Mammary epithelial cell (primary cell): ENCODE measurements at regions of chr19 and their contacts with region 1.

Region 1: GRCh38 chr19:14674764-14675163 is at the start of gene ADGRE3:
- DNase-seq: no peak
- H3K4me3 ChIP-seq: no peak within 1 kb of the TSS
- H3K27ac ChIP-seq: no peak within 1 kb of the TSS
- H3K4me1 ChIP-seq: no peaks in the 10 kb centered on the region
- H3K27me3 ChIP-seq: no peaks in the 10 kb centered on the region
- CTCF ChIP-seq: no peak
- total RNA-seq, gene ADGRE3: not detected

Region 2: GRCh38 chr19:14432791-14433553 is 241.8 kb before region 1 on chr19 and contains the start of gene PKN1:
- CTCF ChIA-PET with region 1: no interaction called
- dilution Hi-C with region 1: no loop called
- in situ Hi-C with region 1: no loop called
- intact Hi-C with region 1: no loop called
- DNase-seq: no peak
- H3K4me3 ChIP-seq: peak within 1 kb of the TSS; percentile 12 to 53 (median 39)
- H3K27ac ChIP-seq: no peak within 1 kb of the TSS
- H3K4me1 ChIP-seq: peaks cover 17% of the 10 kb centered on the region
- H3K27me3 ChIP-seq: no peaks in the 10 kb centered on the region
- CTCF ChIP-seq: peak in 1 of 2 donors; percentile 18
- total RNA-seq, gene PKN1: 26.3 to 43.3 TPM

Region 3: GRCh38 chr19:14467816-14468215 is 206.9 kb before region 1 on chr19:
- CTCF ChIA-PET with region 1: no interaction called
- dilution Hi-C with region 1: no loop called
- in situ Hi-C with region 1: no loop called
- intact Hi-C with region 1: no loop called
- DNase-seq: peak; percentile 35
- H3K4me3 ChIP-seq: no peak overlapping the region
- H3K27ac ChIP-seq: no peak overlapping the region
- H3K4me1 ChIP-seq: peaks cover 5% of the 10 kb centered on the region
- H3K27me3 ChIP-seq: no peaks in the 10 kb centered on the region
- CTCF ChIP-seq: peak; percentile 12 to 30

Region 4: DNA sequence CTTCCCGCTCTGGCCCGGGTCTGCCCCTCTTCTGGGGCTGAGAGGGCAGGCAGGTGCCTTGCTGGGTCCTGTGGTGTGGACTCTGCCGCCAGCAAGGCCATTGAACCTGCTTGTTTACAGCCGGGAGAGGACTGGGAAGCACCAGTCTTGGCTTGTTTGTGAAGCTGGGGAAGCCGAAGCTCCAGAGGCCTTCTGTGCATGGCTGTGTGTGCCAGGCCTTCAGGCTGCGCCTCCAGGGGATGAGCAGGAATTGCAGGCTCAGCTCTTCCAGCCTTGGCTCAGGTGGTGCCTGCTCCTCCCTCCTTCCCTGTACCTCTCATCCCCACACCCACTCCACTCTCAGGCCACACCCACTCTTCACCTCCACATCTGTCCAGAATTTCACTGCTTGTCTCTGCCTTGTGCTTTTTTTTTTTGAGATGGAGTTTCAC is 120.4 kb before region 1 on chr19:
- CTCF ChIA-PET with region 1: no interaction called
- dilution Hi-C with region 1: no loop called
- in situ Hi-C with region 1: no loop called
- intact Hi-C with region 1: no loop called
- DNase-seq: peak; percentile 70
- H3K4me3 ChIP-seq: no peak overlapping the region
- H3K27ac ChIP-seq: no peak overlapping the region
- H3K4me1 ChIP-seq: peaks cover 60% of the 10 kb centered on the region
- H3K27me3 ChIP-seq: no peaks in the 10 kb centered on the region
- CTCF ChIP-seq: peak in 1 of 2 donors; percentile 4

Region 5: DNA sequence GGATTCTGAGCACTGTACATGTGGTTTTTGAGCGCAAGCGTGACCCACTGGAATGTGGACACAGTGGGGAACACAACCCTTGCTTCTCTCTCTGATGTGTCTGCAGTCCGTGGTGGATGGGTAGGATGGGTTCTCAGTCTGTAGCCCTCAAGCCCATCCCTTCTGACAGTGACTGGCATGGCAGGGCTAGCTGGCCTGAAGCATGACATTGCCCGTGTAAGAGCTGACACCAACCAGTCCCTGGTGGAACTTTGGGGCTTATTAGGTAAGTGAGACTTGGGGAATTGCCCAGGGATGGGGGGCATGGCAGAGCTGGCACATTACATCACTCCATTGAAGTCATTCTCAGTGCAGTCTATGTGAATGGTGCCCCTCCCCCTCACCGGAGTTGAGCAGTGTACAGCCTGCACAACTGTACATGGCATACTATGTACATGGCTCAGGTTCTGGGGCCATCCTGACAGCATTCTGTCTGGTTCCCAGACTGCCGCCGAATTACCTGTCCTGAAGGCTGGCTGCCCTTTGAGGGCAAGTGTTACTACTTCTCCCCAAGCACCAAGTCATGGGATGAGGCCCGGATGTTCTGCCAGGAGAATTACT is 75.1 kb before region 1 on chr19:
- CTCF ChIA-PET with region 1: no interaction called
- dilution Hi-C with region 1: loop called (anchors 5 kb)
- in situ Hi-C with region 1: no loop called
- intact Hi-C with region 1: no loop called
- DNase-seq: no peak
- H3K4me3 ChIP-seq: no peak overlapping the region
- H3K27ac ChIP-seq: no peak overlapping the region
- H3K4me1 ChIP-seq: no peaks in the 10 kb centered on the region
- H3K27me3 ChIP-seq: no peaks in the 10 kb centered on the region
- CTCF ChIP-seq: no peak

Region 6: DNA sequence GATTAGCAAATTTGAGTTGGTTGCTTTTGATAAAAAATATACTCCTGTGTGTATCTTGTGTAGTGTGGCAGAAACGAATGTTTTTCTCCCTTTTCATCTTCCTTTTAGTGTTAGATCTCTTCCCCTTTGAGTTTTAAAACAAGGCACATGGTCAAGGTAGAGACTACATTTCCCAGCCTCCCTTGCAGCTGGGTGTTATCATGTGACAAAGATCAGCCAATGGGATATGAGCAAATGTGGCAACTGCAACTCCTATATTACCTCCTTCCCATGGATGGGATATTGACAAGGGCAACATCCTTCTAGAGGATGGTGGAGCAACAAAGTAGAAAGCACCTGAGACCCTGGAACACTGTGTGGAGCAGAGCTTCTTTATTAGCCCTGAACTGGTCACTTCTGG is 42.5 kb before region 1 on chr19:
- CTCF ChIA-PET with region 1: no interaction called
- dilution Hi-C with region 1: loop called (anchors 5 kb)
- in situ Hi-C with region 1: no loop called
- intact Hi-C with region 1: no loop called
- DNase-seq: peak; percentile 31
- H3K4me3 ChIP-seq: no peak overlapping the region
- H3K27ac ChIP-seq: no peak overlapping the region
- H3K4me1 ChIP-seq: no peaks in the 10 kb centered on the region
- H3K27me3 ChIP-seq: no peaks in the 10 kb centered on the region
- CTCF ChIP-seq: no peak